PC-9 (cell line): ENCODE measurements at regions of chr14 and their contacts with region 1.

Region 1: GRCh38 chr14:102782974-102783373 is 5.7 kb downstream of the TRAF3 start:
- DNase-seq: no peak
- H3K4me3 ChIP-seq: no peak overlapping the region
- H3K27ac ChIP-seq: no peak overlapping the region
- H3K4me1 ChIP-seq: peaks cover 15% of the 10 kb centered on the region
- H3K27me3 ChIP-seq: no peaks in the 10 kb centered on the region
- CTCF ChIP-seq: no peak

Region 2: DNA sequence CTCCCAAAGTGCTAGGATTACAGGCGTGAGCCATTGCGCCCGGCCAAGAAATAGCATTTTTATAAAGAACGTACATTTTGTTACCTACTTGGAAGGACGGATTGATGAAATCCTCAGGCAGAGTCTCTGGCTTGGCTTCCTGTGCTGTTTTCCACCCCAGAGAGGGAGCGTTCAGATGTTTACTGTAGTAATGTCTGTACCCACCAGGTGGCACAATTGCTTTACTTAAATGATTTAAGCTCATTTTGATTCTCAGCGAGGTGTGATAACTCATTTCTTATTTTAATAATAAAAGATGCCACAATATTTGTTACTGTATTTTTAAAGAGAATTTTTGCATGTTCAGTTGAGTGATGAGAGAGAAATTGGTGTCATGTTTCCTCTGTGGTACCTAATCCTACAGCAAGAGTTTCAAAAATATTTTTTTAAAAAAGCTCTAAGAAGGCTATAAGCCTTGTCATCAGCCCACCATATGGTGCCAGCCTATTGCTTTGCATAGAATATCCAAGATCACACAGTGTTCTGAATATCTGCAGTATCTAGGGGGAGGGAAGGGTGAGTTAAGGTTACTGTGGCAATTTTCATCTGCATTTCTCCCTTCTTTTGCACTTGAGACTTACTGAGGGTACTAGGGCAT is 88.3 kb before region 1 on chr14:
- CTCF ChIA-PET with region 1: no interaction called
- POLR2A ChIA-PET with region 1: no interaction called
- intact Hi-C with region 1: no loop called
- DNase-seq: peak; percentile 66 to 80
- H3K4me3 ChIP-seq: no peak overlapping the region
- H3K27ac ChIP-seq: no peak overlapping the region
- H3K4me1 ChIP-seq: peaks cover 26% of the 10 kb centered on the region
- H3K27me3 ChIP-seq: no peaks in the 10 kb centered on the region
- CTCF ChIP-seq: peak; percentile 99

Region 3: GRCh38 chr14:102795060-102795925 is 12.3 kb after region 1 on chr14:
- CTCF ChIA-PET with region 1: no interaction called
- POLR2A ChIA-PET with region 1: interaction called, 10 read pairs
- intact Hi-C with region 1: no loop called
- DNase-seq: peak; percentile 69 to 89
- H3K4me3 ChIP-seq: peak overlapping the region; percentile 3; the same call in 1 of the 2 replicates
- H3K27ac ChIP-seq: peak overlapping the region; percentile 57
- H3K4me1 ChIP-seq: peaks cover 16% of the 10 kb centered on the region
- H3K27me3 ChIP-seq: no peaks in the 10 kb centered on the region
- CTCF ChIP-seq: no peak

Region 4: GRCh38 chr14:102917469-102918211 is 134.7 kb after region 1 on chr14:
- CTCF ChIA-PET with region 1: no interaction called
- POLR2A ChIA-PET with region 1: no interaction called
- intact Hi-C with region 1: loop called (anchors 2 kb)
- DNase-seq: peak in 1 of 2 experiments; percentile 54
- H3K4me3 ChIP-seq: no peak overlapping the region
- H3K27ac ChIP-seq: no peak overlapping the region
- H3K4me1 ChIP-seq: no peaks in the 10 kb centered on the region
- H3K27me3 ChIP-seq: no peaks in the 10 kb centered on the region
- CTCF ChIP-seq: peak; percentile 82

Region 5: GRCh38 chr14:103207029-103207387 is 424.0 kb after region 1 on chr14:
- CTCF ChIA-PET with region 1: no interaction called
- POLR2A ChIA-PET with region 1: no interaction called
- intact Hi-C with region 1: no loop called
- DNase-seq: peak; percentile 88 to 98
- H3K4me3 ChIP-seq: peak overlapping the region; percentile 58
- H3K27ac ChIP-seq: peak overlapping the region; percentile 83
- H3K4me1 ChIP-seq: peaks cover 42% of the 10 kb centered on the region
- H3K27me3 ChIP-seq: no peaks in the 10 kb centered on the region
- CTCF ChIP-seq: no peak